ENCODE measurements at regions of chr15 and their contacts with region 1.

Region 1: GRCh38 chr15:64731012-64731806 is 44.2 kb downstream of the RBPMS2 start:
- DNase-seq: no peak
- H3K4me3 ChIP-seq: no peak overlapping the region
- H3K27me3 ChIP-seq: no peaks in the 10 kb centered on the region
- CTCF ChIP-seq: peak; percentile 87

Region 2: DNA sequence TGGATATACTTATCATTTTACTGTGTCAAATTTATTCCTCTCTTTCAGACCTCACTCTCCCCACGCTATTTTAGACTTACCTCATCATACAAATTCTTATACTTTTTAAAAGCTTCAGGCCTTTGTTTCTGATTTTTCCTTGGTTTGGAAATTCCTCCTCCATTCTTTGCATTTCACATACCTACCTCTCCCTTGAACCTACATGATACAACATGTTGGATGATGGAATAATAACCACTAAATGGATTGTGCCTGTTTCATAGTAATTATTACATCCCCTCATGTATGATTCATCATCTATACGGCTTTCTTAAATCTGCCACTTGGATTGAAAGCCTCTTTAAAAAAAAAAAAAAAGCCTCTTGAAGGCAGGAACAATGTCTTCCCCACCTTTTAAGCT is 319.0 kb before region 1 on chr15:
- CTCF ChIA-PET with region 1: no interaction called
- POLR2A ChIA-PET with region 1: no interaction called
- DNase-seq: no peak
- H3K4me3 ChIP-seq: no peak overlapping the region
- H3K27me3 ChIP-seq: no peaks in the 10 kb centered on the region
- CTCF ChIP-seq: no peak

Region 3: GRCh38 chr15:64430000-64430735 is 301.0 kb before region 1 on chr15:
- CTCF ChIA-PET with region 1: interaction called, 24 read pairs
- POLR2A ChIA-PET with region 1: no interaction called
- DNase-seq: peak; percentile 77
- H3K4me3 ChIP-seq: no peak overlapping the region
- H3K27me3 ChIP-seq: no peaks in the 10 kb centered on the region
- CTCF ChIP-seq: no peak

Region 4: GRCh38 chr15:64702816-64703646 is 28.2 kb before region 1 on chr15:
- CTCF ChIA-PET with region 1: interaction called, 395 read pairs
- POLR2A ChIA-PET with region 1: no interaction called
- DNase-seq: peak; percentile 35
- H3K4me3 ChIP-seq: peak overlapping the region; percentile 94
- H3K27me3 ChIP-seq: no peaks in the 10 kb centered on the region
- CTCF ChIP-seq: 0 out of 2 replicates have a peak, but pooled peaks have one; percentile 5

Region 5: DNA sequence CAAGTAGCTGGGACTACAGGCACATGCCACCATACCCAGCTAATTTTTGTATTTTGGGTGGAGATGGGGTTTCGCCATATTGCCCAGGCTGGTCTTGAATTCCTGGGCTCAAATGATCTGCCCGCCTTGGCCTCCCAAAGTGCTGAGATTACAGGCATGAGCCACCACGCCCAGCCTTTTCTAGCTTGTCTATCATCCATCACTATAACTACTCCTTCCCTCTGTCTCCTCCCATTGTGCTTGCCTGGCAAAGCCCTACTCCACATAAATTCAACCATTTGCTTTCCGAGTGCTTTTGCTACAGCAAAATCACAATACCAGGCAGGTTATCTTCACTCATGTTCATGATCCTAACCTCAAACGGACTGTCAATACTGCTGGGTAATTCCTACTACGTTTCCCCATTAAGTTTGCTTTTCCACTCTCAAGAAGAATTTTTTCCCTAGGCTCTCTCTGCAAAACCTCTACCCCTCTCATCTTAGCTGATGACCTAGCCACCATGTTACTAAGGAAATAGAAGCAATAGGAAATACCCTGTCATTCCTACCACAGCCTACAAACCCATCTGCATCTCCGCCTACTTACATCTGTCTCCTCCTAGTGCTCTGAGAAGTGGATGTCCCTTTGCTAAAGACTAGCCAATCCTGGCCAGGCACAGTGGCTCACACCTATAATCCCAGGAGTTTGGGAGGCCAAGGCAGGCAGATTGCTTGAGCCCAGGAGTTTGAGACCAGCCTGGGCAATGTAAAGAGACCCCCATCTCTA is 20.4 kb before region 1 on chr15:
- CTCF ChIA-PET with region 1: interaction called, 13 read pairs
- POLR2A ChIA-PET with region 1: no interaction called
- DNase-seq: no peak
- H3K4me3 ChIP-seq: no peak overlapping the region
- H3K27me3 ChIP-seq: no peaks in the 10 kb centered on the region
- CTCF ChIP-seq: no peak

Region 6: GRCh38 chr15:64717735-64718495 is 13.3 kb before region 1 on chr15:
- CTCF ChIA-PET with region 1: interaction called, 17 read pairs
- POLR2A ChIA-PET with region 1: no interaction called
- DNase-seq: no peak
- H3K4me3 ChIP-seq: no peak overlapping the region
- H3K27me3 ChIP-seq: no peaks in the 10 kb centered on the region
- CTCF ChIP-seq: no peak

Region 7: GRCh38 chr15:64809649-64810496 is 78.7 kb after region 1 on chr15:
- CTCF ChIA-PET with region 1: interaction called, 416 read pairs
- POLR2A ChIA-PET with region 1: no interaction called
- DNase-seq: no peak
- H3K4me3 ChIP-seq: no peak overlapping the region
- H3K27me3 ChIP-seq: peaks cover 1% of the 10 kb centered on the region; the same call in 1 of the 2 replicates
- CTCF ChIP-seq: peak; percentile 98

Region 8: GRCh38 chr15:64851503-64851840 is 120.3 kb after region 1 on chr15:
- CTCF ChIA-PET with region 1: no interaction called
- POLR2A ChIA-PET with region 1: no interaction called
- DNase-seq: peak; percentile 83
- H3K4me3 ChIP-seq: no peak overlapping the region
- H3K27me3 ChIP-seq: no peaks in the 10 kb centered on the region
- CTCF ChIP-seq: no peak